Activated CD8-positive, alpha-beta T cell treated with anti-CD3 and anti-CD28 coated beads for 36 hours (primary cell): ENCODE measurements at regions of chr3 and their contacts with region 1.

Region 1: GRCh38 chr3:141011232-141011996 is 39.7 kb upstream of the SPSB4 start:
- DNase-seq: peak; percentile 97
- ATAC-seq: peak; percentile 98
- H3K4me3 Mint-ChIP-seq: no peak overlapping the region
- H3K27ac Mint-ChIP-seq: no peak overlapping the region
- H3K4me1 Mint-ChIP-seq: peaks cover 10% of the 10 kb centered on the region
- H3K27me3 Mint-ChIP-seq: peaks cover 18% of the 10 kb centered on the region
- CTCF ChIP-seq: peak; percentile 78

Region 2: DNA sequence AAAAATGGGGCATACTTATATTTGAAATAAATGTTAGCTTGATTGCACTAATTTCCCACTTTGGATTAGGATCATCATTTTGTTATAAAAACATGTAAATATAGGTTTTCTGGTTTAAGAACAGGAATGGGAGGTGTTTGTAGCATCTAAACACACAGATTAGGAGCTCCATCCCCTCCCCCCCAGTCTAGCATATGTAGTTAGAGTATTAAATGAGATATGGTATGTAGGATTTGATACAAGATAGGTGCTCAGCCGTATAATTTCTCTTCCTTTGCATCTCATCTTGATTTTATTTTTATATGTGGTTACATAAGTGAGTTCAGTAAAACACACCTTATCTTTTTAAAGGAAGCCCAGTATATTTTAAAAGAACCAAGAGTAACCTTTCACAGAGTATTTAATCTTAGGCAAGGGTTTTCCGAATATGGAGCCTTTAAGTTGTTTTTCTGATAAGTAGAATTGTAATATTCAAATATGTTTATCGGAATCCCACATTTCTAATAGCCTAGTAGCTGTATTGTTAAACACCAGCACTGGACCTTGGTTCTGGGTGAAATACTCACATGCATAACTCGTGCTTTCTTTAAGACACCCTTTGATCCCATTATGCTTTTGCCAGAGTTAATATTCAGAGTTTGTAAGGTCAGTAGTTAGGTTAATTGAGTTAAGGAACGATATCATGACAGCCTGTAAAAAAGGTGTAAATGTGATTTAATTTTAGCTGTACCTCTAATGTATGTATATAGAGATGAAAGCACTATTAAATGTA is 67.4 kb before region 1 on chr3:
- CTCF ChIA-PET with region 1: interaction called, 10 read pairs
- POLR2A ChIA-PET with region 1: no interaction called
- intact Hi-C with region 1: no loop called
- DNase-seq: no peak
- ATAC-seq: no peak
- H3K4me3 Mint-ChIP-seq: peak overlapping the region; percentile 96
- H3K27ac Mint-ChIP-seq: no peak overlapping the region
- H3K4me1 Mint-ChIP-seq: peaks cover 56% of the 10 kb centered on the region
- H3K27me3 Mint-ChIP-seq: no peaks in the 10 kb centered on the region
- CTCF ChIP-seq: no peak

Region 3: DNA sequence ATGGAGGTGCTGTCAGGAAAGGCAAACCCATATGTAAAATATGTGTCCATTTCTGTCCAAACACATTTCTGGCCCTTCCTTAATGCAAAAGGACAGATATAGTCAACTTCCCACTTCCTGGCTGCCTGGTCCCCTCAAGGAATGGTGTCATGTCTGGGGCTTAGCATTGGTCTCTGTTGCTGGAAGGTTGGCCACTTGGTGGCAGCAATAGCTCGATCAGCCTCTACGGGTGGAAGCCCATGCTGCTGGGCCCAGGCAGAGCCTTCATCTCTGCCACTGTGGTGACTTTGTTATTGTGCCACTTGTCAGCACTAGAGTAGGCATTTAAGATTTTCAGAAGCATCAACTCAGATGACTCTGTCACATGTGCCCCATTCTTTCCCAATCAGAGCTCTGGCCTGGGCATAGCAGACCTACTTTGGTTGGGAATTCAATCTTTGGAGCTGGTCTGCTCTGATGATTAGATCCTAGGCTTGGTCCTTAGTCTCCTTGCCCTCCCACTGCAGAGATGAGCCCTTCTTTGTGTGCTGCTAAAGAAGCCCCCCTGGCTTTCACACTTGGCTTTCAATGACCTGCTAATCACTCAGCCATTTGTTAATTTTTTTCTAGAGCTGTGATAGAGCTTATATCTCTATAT is 11.3 kb before region 1 on chr3:
- CTCF ChIA-PET with region 1: interaction called, 54 read pairs
- POLR2A ChIA-PET with region 1: no interaction called
- intact Hi-C with region 1: no loop called
- DNase-seq: peak; percentile 72
- ATAC-seq: peak; percentile 88
- H3K4me3 Mint-ChIP-seq: no peak overlapping the region
- H3K27ac Mint-ChIP-seq: no peak overlapping the region
- H3K4me1 Mint-ChIP-seq: peaks cover 6% of the 10 kb centered on the region
- H3K27me3 Mint-ChIP-seq: peaks cover 1% of the 10 kb centered on the region
- CTCF ChIP-seq: peak; percentile 81

Region 4: DNA sequence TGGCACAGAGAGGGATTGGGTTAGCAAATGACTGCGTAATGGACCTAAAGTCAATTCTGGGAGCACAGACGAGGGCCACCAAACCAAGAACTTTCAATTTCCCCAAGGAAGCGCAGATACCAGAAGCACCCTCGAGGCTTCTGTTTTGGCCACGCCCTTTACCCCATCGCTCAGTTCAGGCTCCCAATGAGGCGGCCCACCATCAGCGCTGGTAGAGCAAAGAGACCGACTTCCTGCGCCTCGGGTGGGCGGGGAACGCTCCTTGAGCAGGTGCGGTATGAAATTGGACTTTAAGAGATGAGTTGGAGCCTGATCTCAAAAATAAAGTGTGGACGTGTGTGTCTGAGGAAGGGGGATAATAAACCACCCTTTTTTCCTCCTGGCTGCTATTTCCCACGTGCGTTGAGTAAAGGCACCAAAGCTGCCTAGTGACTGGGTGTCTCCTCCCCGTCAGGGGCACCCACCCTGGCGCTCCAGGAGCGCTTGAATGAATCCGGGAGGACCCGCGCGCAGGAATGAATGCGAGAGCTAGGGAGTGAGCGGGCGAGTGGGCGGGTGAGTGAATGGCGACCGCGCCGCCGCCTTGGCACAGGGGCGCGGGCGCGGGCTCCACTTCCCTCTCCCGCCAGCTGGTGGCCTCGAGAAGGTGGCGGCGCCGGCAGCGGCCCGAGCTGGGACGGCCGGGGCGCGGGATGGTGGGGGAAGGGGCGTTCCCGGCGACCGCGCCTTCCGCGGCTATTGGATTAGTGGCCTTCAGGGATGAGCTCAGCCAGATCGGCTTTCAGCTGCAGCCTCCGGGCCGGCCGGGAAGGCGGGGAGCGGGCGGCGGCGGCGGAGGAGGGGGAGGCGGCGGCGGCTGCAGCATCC is 39.4 kb after region 1 on chr3 and contains the start of gene SPSB4:
- CTCF ChIA-PET with region 1: interaction called, 13 read pairs
- POLR2A ChIA-PET with region 1: interaction called, 3 read pairs
- intact Hi-C with region 1: no loop called
- DNase-seq: peak; percentile 61
- ATAC-seq: peak; percentile 75
- H3K4me3 Mint-ChIP-seq: peak within 1 kb of the TSS; percentile 66
- H3K27ac Mint-ChIP-seq: no peak within 1 kb of the TSS
- H3K4me1 Mint-ChIP-seq: peaks cover 11% of the 10 kb centered on the region
- H3K27me3 Mint-ChIP-seq: peaks cover 57% of the 10 kb centered on the region
- CTCF ChIP-seq: peak; percentile 54
- total RNA-seq, gene SPSB4: not detected

Region 5: DNA sequence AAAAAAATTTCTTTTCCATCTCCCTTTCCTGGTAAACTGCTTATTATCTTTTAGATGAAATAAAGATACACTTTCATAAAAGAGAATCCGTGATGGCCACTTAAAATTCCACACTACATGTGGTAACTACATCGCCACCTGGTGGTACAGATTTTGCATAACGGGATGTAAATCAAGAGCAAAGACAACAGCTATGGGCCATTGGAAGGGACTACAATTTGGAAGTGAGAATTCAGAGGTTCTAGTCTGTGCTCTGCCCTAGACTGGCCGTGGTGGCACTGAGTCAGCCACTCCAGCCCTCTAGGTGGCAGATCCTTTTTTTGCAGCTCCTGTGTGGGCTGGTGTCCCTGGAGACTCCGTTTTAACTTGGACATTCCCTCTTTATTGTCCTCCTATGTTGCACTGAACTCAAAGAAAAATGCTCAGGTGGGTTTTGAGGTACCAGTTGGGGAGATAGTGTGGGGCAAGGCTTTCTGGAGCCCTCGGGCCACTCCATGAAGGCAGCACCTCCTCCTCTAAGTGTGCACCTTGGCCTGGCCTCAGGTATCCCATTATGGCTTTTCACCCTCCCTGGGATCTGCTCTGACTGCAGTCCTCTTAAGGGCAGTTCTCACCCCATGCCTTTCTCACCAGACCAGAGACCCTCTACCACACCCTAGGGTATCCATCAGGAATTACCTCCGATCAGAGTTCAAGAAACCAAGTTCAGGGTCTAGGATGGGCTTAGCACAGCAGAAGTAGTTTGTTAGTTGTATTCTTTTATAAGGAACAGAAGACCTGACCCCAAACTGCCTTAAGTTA is 94.6 kb after region 1 on chr3:
- CTCF ChIA-PET with region 1: interaction called, 14 read pairs
- POLR2A ChIA-PET with region 1: no interaction called
- intact Hi-C with region 1: no loop called
- DNase-seq: peak; percentile 87
- ATAC-seq: peak; percentile 85
- H3K4me3 Mint-ChIP-seq: no peak overlapping the region
- H3K27ac Mint-ChIP-seq: no peak overlapping the region
- H3K4me1 Mint-ChIP-seq: no peaks in the 10 kb centered on the region
- H3K27me3 Mint-ChIP-seq: no peaks in the 10 kb centered on the region
- CTCF ChIP-seq: peak; percentile 74

Region 6: GRCh38 chr3:141243271-141243707 is 231.9 kb after region 1 on chr3:
- CTCF ChIA-PET with region 1: no interaction called
- POLR2A ChIA-PET with region 1: no interaction called
- intact Hi-C with region 1: no loop called
- DNase-seq: peak; percentile 93
- ATAC-seq: peak; percentile 99
- H3K4me3 Mint-ChIP-seq: peak overlapping the region; percentile 59
- H3K27ac Mint-ChIP-seq: peak overlapping the region; percentile 86
- H3K4me1 Mint-ChIP-seq: peaks cover 50% of the 10 kb centered on the region
- H3K27me3 Mint-ChIP-seq: no peaks in the 10 kb centered on the region
- CTCF ChIP-seq: no peak